CD8-positive, alpha-beta T cell (primary cell): ENCODE measurements at regions of chr17 and their contacts with region 1.

Region 1: DNA sequence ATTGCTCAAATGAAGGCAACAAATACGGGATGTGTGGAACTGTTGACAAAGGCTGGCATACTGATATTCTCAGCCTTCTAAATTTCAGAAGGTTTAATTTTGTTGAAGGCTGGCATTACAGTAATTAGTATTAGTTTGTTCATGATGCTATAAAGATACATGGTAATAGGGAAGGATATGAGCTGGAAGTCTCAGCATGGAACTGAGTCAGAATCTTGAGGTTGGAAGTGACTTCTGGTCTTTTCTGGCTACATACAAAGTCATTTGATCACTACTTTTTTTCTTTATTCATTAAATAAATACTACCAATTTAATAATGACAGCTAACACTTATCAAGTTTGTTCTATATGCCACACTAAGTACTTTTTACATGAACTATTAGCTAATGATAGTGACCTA is 22.6 kb downstream of the RABEP1 start:
- DNase-seq: no peak
- ATAC-seq: no peak
- H3K4me3 ChIP-seq: no peak overlapping the region
- H3K4me3 Mint-ChIP-seq: no peak overlapping the region
- H3K27ac ChIP-seq: no peak overlapping the region
- H3K27ac Mint-ChIP-seq: no peak overlapping the region
- H3K4me1 ChIP-seq: no peaks in the 10 kb centered on the region
- H3K4me1 Mint-ChIP-seq: peaks cover 50% of the 10 kb centered on the region
- H3K27me3 ChIP-seq: no peaks in the 10 kb centered on the region
- H3K27me3 Mint-ChIP-seq: no peaks in the 10 kb centered on the region
- CTCF ChIP-seq: no peak

Region 2: DNA sequence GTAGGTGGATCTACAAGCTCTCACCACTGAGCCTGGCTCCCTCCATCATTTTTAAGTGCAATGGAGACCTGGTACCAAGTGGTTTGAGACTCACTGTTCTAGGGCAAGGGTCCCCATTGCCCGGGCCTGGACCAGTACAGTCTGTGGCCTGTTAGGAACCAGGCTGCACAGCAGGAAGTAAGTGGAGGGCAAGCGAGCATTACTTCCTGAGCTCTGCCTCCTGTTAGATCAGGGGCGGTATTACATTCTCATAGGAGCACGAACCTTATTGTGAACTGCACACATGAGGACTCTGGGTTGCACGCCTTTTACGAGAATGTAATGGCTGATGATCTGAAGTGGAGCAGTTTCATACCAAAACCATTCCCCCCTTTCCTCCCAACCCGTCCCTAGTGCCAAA is 106.2 kb before region 1 on chr17:
- CTCF ChIA-PET with region 1: interaction called, 15 read pairs
- POLR2A ChIA-PET with region 1: no interaction called
- intact Hi-C with region 1: loop called (anchors 1 kb)
- DNase-seq: peak in 3 of 9 experiments; percentile 22 to 57 (median 43)
- ATAC-seq: peak; percentile 30
- H3K4me3 ChIP-seq: no peak overlapping the region
- H3K4me3 Mint-ChIP-seq: no peak overlapping the region
- H3K27ac ChIP-seq: peak overlapping the region in 1 of 2 experiments; percentile 50
- H3K27ac Mint-ChIP-seq: peak overlapping the region; percentile 79
- H3K4me1 ChIP-seq: peaks cover 6% of the 10 kb centered on the region
- H3K4me1 Mint-ChIP-seq: peaks cover 17% of the 10 kb centered on the region
- H3K27me3 ChIP-seq: no peaks in the 10 kb centered on the region
- H3K27me3 Mint-ChIP-seq: no peaks in the 10 kb centered on the region
- CTCF ChIP-seq: no peak

Region 3: GRCh38 chr17:5237541-5238016 is 67.1 kb before region 1 on chr17:
- CTCF ChIA-PET with region 1: no interaction called
- POLR2A ChIA-PET with region 1: no interaction called
- intact Hi-C with region 1: no loop called
- DNase-seq: peak in 7 of 9 experiments; percentile 31 to 77 (median 45)
- ATAC-seq: peak; percentile 44
- H3K4me3 ChIP-seq: no peak overlapping the region
- H3K4me3 Mint-ChIP-seq: no peak overlapping the region
- H3K27ac ChIP-seq: peak overlapping the region; percentile 1 to 78
- H3K27ac Mint-ChIP-seq: peak overlapping the region; percentile 74
- H3K4me1 ChIP-seq: peaks cover 32% of the 10 kb centered on the region
- H3K4me1 Mint-ChIP-seq: peaks cover 53% of the 10 kb centered on the region
- H3K27me3 ChIP-seq: no peaks in the 10 kb centered on the region
- H3K27me3 Mint-ChIP-seq: no peaks in the 10 kb centered on the region
- CTCF ChIP-seq: peak; percentile 35

Region 4: GRCh38 chr17:5419356-5419958 is 114.8 kb after region 1 on chr17 and contains the start of gene NUP88:
- CTCF ChIA-PET with region 1: no interaction called
- POLR2A ChIA-PET with region 1: no interaction called
- intact Hi-C with region 1: no loop called
- DNase-seq: peak; percentile 92 to 99 (median 96)
- ATAC-seq: peak; percentile 87
- H3K4me3 ChIP-seq: peak within 1 kb of the TSS; percentile 93 to 96
- H3K4me3 Mint-ChIP-seq: peak within 1 kb of the TSS; percentile 99
- H3K27ac ChIP-seq: peak within 1 kb of the TSS; percentile 91 to 99
- H3K27ac Mint-ChIP-seq: peak within 1 kb of the TSS; percentile 99
- H3K4me1 ChIP-seq: peaks cover 44% of the 10 kb centered on the region
- H3K4me1 Mint-ChIP-seq: peaks cover 47% of the 10 kb centered on the region
- H3K27me3 ChIP-seq: no peaks in the 10 kb centered on the region
- H3K27me3 Mint-ChIP-seq: no peaks in the 10 kb centered on the region
- CTCF ChIP-seq: no peak
- total RNA-seq, gene NUP88: 149 to 156 TPM